Left ventricle myocardium inferior (tissue), 1 donor: ENCODE measurements at regions of chr4 and their contacts with region 1.

Region 1: DNA sequence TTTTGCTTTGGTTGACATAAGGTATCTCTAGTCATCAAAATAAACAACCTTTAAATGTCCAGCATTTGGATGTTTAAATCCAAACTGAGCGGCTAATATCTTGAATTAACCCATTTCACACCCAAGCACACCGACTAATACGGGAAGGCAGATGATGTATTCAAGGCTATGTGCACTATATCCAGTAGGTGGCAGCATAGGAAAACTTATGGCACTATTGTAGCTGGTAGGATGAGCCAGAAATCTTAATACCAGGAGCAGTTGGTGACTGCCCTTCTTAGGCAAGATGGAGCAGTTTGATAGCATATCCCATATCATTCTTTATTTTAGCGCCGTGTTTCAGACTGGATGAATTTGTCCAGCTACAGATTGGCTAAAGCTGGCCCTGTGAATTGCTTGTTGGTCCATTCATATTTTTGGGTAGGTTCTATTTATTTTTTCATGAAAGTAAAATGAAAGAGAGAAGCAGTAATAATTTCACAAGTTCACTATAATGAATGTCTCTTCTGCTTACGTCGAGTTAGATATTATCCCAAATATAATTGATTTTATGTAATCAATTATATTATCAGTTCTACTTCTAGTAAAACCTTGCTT is 24.4 kb downstream of the UCHL1 start:
- DNase-seq: no peak
- H3K4me3 ChIP-seq: no peak overlapping the region
- H3K27ac ChIP-seq: no peak overlapping the region
- H3K4me1 ChIP-seq: no peaks in the 10 kb centered on the region
- H3K27me3 ChIP-seq: peaks cover 21% of the 10 kb centered on the region
- CTCF ChIP-seq: peak; percentile 90

Region 2: GRCh38 chr4:40782876-40783275 is 498.3 kb before region 1 on chr4:
- intact Hi-C with region 1: no loop called
- DNase-seq: no peak
- H3K4me3 ChIP-seq: no peak overlapping the region
- H3K27ac ChIP-seq: no peak overlapping the region
- H3K4me1 ChIP-seq: no peaks in the 10 kb centered on the region
- H3K27me3 ChIP-seq: peaks cover 3% of the 10 kb centered on the region
- CTCF ChIP-seq: no peak

Region 3: DNA sequence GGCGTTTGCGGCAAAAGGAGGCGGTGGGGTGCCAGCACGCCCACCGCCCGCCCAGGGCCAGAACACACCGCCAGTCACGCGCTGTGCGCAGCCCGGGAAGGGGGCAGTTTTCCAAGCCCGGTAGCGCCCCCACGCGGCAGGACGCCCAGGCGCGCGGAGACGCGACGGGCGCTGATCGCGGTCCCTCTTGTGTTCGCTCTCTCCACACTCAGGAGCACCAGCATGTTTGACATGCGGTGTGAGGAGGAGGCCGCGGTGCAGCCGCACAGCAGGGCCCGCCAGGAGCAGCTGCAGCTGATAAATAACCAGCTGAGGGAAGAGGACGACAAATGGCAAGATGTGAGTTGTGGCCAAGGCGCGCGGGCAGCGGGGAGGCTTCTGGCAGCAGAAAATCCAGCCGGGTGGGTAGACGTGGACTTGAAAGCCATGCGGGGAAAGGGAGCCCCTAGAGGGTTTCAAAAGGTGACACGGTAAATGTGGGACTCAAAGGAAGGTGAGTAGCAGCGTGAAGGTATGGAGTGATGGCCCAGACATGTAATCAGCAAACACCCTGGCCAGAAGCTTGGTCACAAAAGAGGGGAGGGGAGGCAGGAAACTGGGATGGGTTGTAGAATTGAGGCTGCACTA is 363.3 kb after region 1 on chr4:
- intact Hi-C with region 1: loop called (anchors 5 kb)
- DNase-seq: peak; percentile 77
- H3K4me3 ChIP-seq: peak overlapping the region; percentile 37
- H3K27ac ChIP-seq: peak overlapping the region; percentile 16
- H3K4me1 ChIP-seq: peaks cover 40% of the 10 kb centered on the region
- H3K27me3 ChIP-seq: no peaks in the 10 kb centered on the region
- CTCF ChIP-seq: peak; percentile 87

Region 4: GRCh38 chr4:41661442-41662076 is 380.4 kb after region 1 on chr4:
- intact Hi-C with region 1: loop called (anchors 2 kb)
- DNase-seq: peak; percentile 56
- H3K4me3 ChIP-seq: no peak overlapping the region
- H3K27ac ChIP-seq: no peak overlapping the region
- H3K4me1 ChIP-seq: peaks cover 16% of the 10 kb centered on the region
- H3K27me3 ChIP-seq: no peaks in the 10 kb centered on the region
- CTCF ChIP-seq: peak; percentile 98